Astrocyte of the cerebellum (primary cell): ENCODE measurements at regions of chr12 and their contacts with region 1.

Region 1: GRCh38 chr12:114982760-114983159 is 298.8 kb upstream of the TBX3 start:
- DNase-seq: no peak
- H3K4me3 ChIP-seq: no peak overlapping the region
- CTCF ChIP-seq: no peak

Region 2: DNA sequence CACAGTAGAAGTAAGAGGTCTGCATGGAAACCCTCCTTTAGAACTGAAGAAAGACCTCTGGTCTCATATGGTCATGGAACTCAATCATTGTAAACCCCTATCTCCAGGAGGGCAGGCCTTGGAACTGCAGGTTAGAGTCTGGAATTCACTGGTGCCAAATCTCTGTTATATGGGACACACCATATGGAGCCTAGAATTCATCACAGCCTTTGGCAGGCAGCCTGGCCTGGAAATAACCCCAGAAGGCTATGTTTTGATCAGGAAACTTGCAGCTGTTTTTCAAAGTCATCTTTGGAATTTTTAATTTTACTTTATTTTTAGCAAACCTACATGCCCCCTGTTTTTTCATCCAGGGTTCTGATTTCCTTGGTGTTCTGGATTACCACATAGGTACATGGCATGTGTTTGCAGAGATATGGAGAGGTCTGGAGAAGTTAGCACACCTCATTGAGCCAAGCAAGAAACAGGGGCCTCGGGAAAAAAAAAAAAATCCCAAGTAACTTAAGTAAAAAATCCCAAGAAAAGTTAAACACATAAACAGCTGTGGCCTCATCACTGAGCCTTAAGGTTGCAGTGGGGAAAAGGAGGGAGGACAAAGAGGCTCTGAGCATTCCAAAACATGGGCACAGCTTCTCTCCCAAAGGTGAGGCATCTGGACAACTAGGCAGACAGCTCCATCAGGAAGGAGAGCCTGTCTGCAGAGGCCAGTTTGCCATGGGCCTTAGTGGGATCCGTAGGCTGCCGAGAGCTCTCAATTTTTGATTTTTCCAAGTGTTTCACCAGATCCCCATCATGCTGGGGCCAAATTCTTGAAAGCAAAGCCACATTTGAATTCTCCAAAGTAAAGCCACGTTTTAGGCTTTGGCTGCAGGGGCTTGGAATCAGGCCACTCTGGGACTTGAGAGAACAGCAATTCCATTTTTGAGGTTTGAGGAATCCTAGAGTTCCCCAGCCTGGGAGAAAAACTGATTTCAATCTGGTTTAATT is 40.8 kb after region 1 on chr12:
- in situ Hi-C with region 1: loop called (anchors 5 kb)
- DNase-seq: peak; percentile 19
- H3K4me3 ChIP-seq: no peak overlapping the region
- CTCF ChIP-seq: no peak

Region 3: DNA sequence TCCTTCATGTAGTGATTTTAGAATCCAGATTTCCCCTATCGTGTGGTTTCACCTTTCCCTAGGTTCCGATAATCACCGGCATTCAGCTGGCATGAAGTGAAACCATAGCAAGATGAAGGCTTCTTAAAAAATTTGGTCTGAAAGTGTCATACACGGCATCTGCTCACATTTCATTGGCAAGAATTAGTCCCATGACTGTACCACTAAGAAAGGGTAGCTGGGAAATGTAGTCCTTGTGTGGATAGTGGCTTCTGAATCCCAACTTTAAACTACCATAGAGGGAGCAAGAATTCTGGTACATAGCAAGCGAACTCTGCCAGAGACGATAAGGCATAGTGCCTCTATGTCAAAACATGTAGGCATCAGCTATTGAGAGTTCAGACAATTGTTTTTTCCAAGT is 61.3 kb after region 1 on chr12:
- in situ Hi-C with region 1: no loop called
- DNase-seq: no peak
- H3K4me3 ChIP-seq: no peak overlapping the region
- CTCF ChIP-seq: no peak